ENCODE measurements at regions of chr9 and their contacts with region 1.

Region 1: DNA sequence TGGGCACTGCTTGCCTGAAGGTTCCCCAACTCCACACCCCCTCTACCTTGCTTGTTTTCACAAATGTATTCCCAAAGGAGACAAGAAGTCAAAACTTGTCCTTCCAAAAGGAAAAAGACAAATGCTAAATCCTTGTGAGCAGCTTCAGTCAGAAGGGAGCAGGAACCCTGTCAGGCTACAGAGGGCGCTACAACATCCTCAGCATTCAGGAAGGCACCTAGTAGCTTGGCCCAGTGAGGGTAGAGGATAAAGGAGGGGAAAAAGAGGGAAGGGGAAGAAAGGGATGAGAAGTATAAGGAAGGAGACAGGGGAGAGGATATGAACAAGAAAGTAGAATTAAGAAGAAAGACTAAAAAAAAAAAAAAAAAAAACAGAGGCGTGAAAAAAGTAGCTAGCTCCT is 97.5 kb downstream of the MLLT3 start:
- DNase-seq: peak; percentile 71
- ATAC-seq: peak; percentile 97
- H3K4me3 Mint-ChIP-seq: no peak overlapping the region
- H3K27ac Mint-ChIP-seq: no peak overlapping the region
- H3K4me1 Mint-ChIP-seq: peaks cover 21% of the 10 kb centered on the region
- H3K27me3 Mint-ChIP-seq: no peaks in the 10 kb centered on the region
- CTCF ChIP-seq: peak; percentile 83

Region 2: GRCh38 chr9:20538092-20538491 is 13.3 kb after region 1 on chr9:
- CTCF ChIA-PET with region 1: interaction called, 23 read pairs
- POLR2A ChIA-PET with region 1: no interaction called
- DNase-seq: no peak
- ATAC-seq: no peak
- H3K4me3 Mint-ChIP-seq: no peak overlapping the region
- H3K27ac Mint-ChIP-seq: no peak overlapping the region
- H3K4me1 Mint-ChIP-seq: no peaks in the 10 kb centered on the region
- H3K27me3 Mint-ChIP-seq: no peaks in the 10 kb centered on the region; the same call in 1 of the 2 replicates
- CTCF ChIP-seq: no peak

Region 3: DNA sequence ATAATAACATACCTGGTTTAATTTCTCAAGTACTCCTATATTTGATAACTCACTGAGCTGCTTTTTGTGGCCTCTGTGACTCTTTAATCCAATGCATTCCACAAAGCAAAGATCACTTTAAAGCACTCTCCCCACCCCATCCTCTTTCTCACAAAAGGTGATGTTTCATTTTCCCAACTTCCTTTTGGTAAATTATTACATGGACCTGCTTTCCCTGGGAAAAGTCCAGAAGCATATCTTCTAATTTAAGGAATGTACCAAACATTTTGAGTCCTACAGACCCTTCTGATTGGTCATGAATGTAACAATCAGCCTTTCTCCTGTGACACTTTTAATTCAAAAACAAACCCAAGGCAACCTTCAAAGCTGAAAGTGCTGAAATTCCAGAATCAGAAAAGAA is 26.5 kb after region 1 on chr9:
- CTCF ChIA-PET with region 1: interaction called, 11 read pairs
- POLR2A ChIA-PET with region 1: no interaction called
- DNase-seq: no peak
- ATAC-seq: no peak
- H3K4me3 Mint-ChIP-seq: no peak overlapping the region
- H3K27ac Mint-ChIP-seq: peak overlapping the region; percentile 57
- H3K4me1 Mint-ChIP-seq: peaks cover 27% of the 10 kb centered on the region
- H3K27me3 Mint-ChIP-seq: no peaks in the 10 kb centered on the region
- CTCF ChIP-seq: no peak

Region 4: DNA sequence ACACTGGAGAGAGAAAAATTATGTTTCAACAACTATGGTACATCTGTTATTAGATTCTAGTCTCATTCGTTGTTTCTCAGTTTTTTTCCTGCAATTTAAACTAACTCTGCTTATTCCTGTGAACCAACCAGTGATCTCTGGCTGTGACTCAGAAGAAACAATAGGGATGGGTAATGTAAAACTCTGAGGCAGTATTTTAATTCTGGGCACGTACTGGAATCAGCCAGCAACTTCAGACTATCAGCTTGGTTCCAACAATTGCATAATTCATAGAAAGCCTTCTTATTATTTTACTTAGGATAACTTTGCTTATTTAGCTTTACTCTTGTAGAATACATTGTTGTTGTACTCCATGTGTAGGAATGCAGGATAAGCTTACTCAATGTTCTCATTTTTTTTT is 68.8 kb after region 1 on chr9:
- CTCF ChIA-PET with region 1: interaction called, 11 read pairs
- POLR2A ChIA-PET with region 1: no interaction called
- DNase-seq: no peak
- ATAC-seq: no peak
- H3K4me3 Mint-ChIP-seq: no peak overlapping the region
- H3K27ac Mint-ChIP-seq: no peak overlapping the region
- H3K4me1 Mint-ChIP-seq: peaks cover 8% of the 10 kb centered on the region
- H3K27me3 Mint-ChIP-seq: no peaks in the 10 kb centered on the region
- CTCF ChIP-seq: no peak

Region 5: DNA sequence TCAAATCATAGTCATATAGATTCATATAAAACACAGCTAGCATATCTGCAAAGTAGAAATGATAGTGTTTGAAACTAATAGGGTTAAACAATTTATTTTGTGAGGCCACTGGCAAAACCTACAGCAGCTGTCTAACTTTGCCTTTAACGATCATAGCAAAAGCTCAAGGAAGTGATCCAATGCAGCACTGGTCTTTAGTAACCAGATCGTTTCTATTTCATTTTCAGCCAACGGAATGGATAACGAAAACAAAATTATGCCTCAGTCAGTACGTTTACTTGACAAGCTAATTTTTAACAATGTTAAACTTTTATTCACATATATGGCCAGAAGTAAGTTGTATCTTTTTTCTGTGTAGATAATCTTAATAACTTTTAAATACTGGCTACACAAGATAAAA is 79.8 kb after region 1 on chr9:
- CTCF ChIA-PET with region 1: interaction called, 10 read pairs
- POLR2A ChIA-PET with region 1: no interaction called
- DNase-seq: no peak
- ATAC-seq: no peak
- H3K4me3 Mint-ChIP-seq: no peak overlapping the region
- H3K27ac Mint-ChIP-seq: no peak overlapping the region
- H3K4me1 Mint-ChIP-seq: peaks cover 28% of the 10 kb centered on the region
- H3K27me3 Mint-ChIP-seq: no peaks in the 10 kb centered on the region
- CTCF ChIP-seq: no peak

Region 6: GRCh38 chr9:20622330-20623020 is 97.7 kb after region 1 on chr9 and contains the start of gene MLLT3:
- CTCF ChIA-PET with region 1: interaction called, 11 read pairs
- POLR2A ChIA-PET with region 1: no interaction called
- DNase-seq: peak; percentile 94
- ATAC-seq: peak; percentile 87
- H3K4me3 Mint-ChIP-seq: peak within 1 kb of the TSS; percentile 73
- H3K27ac Mint-ChIP-seq: no peak within 1 kb of the TSS
- H3K4me1 Mint-ChIP-seq: peaks cover 29% of the 10 kb centered on the region
- H3K27me3 Mint-ChIP-seq: peaks cover 62% of the 10 kb centered on the region
- CTCF ChIP-seq: no peak
- total RNA-seq, gene MLLT3: 7.0 to 11.6 TPM (median 10.0 TPM) in 3 replicates

Region 7: GRCh38 chr9:21110708-21111576 is 586.2 kb after region 1 on chr9:
- CTCF ChIA-PET with region 1: interaction called, 15 read pairs
- POLR2A ChIA-PET with region 1: no interaction called
- DNase-seq: no peak
- ATAC-seq: peak; percentile 96
- H3K4me3 Mint-ChIP-seq: no peak overlapping the region
- H3K27ac Mint-ChIP-seq: no peak overlapping the region
- H3K4me1 Mint-ChIP-seq: no peaks in the 10 kb centered on the region
- H3K27me3 Mint-ChIP-seq: no peaks in the 10 kb centered on the region
- CTCF ChIP-seq: peak; percentile 66

Measured in WTC11 (cell line).